ENCODE measurements at regions of chr20 and their contacts with region 1.

Region 1: GRCh38 chr20:18507218-18508021 is at the start of gene SEC23B:
- DNase-seq: peak; percentile 98
- H3K4me3 Mint-ChIP-seq: peak within 1 kb of the TSS; percentile 99
- H3K27ac Mint-ChIP-seq: peak within 1 kb of the TSS; percentile 99
- H3K4me1 Mint-ChIP-seq: peaks cover 53% of the 10 kb centered on the region
- H3K27me3 Mint-ChIP-seq: no peaks in the 10 kb centered on the region
- total RNA-seq, gene SEC23B: 95.2 to 101 TPM

Region 2: DNA sequence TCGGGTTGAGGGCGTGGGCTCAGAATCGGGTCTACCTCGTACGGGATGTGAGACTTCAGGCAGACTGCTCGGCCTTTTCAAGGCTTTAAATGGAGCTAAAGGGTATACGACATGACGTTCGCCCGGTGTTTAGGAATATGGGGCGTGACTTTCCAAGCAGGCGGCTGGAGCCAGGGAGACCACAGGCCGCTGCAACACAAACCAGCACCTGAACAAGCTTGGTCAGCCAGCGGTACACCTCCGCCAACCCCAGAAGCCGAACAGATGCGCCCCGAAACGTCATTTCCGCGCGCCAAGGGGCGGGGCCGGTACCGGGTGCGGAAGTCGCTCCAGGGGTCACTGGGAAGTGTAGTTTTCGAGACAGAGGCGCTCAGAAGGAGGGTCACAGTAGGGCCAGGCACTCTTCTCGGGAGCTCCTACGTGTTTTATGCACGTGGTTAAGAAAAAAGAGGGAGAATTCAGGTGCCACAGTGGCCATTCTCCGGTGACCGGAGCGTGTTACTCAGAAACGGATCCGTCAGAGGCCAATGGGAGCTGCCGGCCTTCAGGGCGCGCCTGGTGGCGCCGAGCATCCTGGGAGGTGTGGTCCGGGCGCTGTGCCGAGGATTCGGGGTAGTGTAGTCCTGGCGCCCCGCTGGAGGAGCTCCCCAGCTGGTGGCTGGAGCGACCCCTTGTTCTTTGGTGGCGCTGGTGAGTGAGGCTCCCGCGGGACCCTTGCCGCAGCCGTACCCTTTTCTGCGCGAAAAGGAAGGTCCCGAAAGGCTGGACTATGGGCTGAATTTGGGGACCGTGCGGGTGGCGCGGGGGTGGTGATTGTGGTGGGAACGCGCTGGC is 219.3 kb before region 1 on chr20 and contains the start of gene ZNF133:
- CTCF ChIA-PET with region 1: interaction called, 5 read pairs
- POLR2A ChIA-PET with region 1: interaction called, 24 read pairs
- DNase-seq: peak; percentile 96
- H3K4me3 Mint-ChIP-seq: peak within 1 kb of the TSS; percentile 95
- H3K27ac Mint-ChIP-seq: peak within 1 kb of the TSS; percentile 93
- H3K4me1 Mint-ChIP-seq: peaks cover 29% of the 10 kb centered on the region
- H3K27me3 Mint-ChIP-seq: peaks cover 15% of the 10 kb centered on the region
- total RNA-seq, gene ZNF133: 8.4 to 10.2 TPM

Region 3: DNA sequence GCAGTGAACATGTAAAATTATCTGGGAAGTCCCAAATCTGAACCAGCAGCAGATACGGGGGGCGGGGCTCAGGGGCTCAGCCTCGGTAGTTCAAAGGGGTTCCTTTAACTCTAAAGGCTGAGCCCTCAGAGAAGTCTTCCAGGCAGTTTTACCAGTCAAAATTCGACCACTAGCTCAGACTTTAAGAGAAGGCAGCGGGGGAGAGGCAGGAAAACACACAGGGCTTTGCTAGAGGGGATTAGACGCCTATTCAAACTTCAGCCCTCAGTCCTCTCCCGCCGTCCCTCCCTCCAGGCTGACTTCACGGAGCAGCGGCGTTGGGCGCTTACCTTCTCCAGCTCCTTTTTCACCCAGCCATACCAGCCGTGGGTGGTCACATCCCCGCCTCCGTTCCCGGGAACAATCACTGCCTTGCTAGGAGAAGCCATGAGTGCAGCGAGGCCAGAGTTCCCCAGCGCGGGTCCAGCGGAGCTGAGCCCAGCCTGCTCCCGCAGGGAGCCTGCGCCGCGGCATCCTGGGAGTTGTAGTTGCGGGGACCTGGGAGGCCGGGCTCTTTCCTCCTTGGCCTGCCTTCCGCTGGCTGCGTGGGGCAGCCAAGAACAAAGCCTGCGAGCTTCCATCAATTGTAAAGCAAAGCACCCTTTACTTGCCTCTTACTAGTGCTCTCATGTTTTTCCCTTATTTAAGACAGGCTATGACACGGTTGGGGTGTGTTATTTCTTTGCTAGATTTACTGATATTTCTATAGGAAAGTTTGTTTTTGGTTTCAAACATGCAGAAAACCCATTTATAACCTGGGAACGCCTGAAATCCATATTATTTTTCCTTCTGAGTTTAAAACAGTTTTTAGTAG is 10.5 kb before region 1 on chr20 and contains the start of gene RBBP9:
- CTCF ChIA-PET with region 1: interaction called, 30 read pairs
- POLR2A ChIA-PET with region 1: interaction called, 143 read pairs
- DNase-seq: peak; percentile 79
- H3K4me3 Mint-ChIP-seq: peak within 1 kb of the TSS; percentile 98
- H3K27ac Mint-ChIP-seq: peak within 1 kb of the TSS; percentile 77
- H3K4me1 Mint-ChIP-seq: peaks cover 26% of the 10 kb centered on the region
- H3K27me3 Mint-ChIP-seq: no peaks in the 10 kb centered on the region
- total RNA-seq, gene RBBP9: 18.0 to 20.4 TPM

Region 4: DNA sequence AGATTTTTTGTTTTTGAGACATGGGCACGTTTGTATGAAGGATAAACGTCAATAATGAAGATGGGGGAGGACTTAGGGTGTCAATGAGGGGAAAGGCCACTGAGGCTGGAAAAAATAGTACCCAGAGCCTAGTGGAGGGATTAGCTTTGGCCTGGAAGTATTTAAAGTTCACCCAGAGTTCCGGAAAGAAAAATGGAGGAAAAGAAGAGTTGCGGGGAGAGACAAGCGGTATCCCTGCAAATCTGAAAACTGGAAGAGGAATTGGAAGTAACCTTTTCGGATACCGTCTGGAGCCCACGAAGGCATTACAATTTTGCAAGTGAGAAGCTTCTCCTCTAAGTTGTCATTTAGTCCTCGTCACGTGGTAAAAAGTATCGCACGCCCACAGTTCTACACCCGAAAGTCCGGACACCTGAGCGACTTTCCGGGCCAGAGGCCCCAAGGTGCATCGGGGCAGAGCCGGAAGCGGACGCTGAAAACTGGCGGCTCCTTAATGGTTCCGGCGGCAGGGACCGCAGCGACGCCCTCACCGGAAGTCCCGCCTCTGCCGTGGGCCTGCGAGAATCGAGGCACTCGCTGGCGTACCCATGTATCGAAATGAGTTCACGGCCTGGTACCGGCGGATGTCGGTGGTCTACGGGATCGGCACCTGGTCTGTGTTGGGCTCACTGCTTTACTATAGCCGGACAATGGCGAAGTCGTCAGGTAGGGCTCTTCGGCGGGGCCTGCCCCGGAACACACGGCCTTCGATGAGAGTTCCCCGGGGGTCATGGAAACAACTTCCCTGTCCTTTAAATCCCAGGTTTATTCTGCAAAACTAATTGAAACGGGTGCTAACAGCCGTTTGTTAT is 59.7 kb after region 1 on chr20 and contains the start of gene SMIM26:
- CTCF ChIA-PET with region 1: interaction called, 4 read pairs
- POLR2A ChIA-PET with region 1: interaction called, 25 read pairs
- DNase-seq: peak; percentile 94
- H3K4me3 Mint-ChIP-seq: peak within 1 kb of the TSS; percentile 95
- H3K27ac Mint-ChIP-seq: peak within 1 kb of the TSS; percentile 89
- H3K4me1 Mint-ChIP-seq: peaks cover 23% of the 10 kb centered on the region
- H3K27me3 Mint-ChIP-seq: no peaks in the 10 kb centered on the region
- total RNA-seq, gene SMIM26: 61.4 to 64.7 TPM

Measured in activated CD4-positive, alpha-beta memory T cell treated with anti-CD3 and anti-CD28 coated beads, Interleukin-2, amount 10 ng/mL, durations not matched to agents 7 days and 5 days (primary cell).